HAP-1 (cell line): ENCODE measurements at regions of chr2 and their contacts with region 1.

Region 1: GRCh38 chr2:121218386-121218938 is 66.5 kb downstream of the TFCP2L1 start:
- DNase-seq: no peak
- H3K4me3 ChIP-seq: no peak overlapping the region
- H3K4me1 ChIP-seq: no peaks in the 10 kb centered on the region
- H3K27me3 ChIP-seq: no peaks in the 10 kb centered on the region

Region 2: GRCh38 chr2:121254748-121255147 is 36.3 kb after region 1 on chr2:
- in situ Hi-C with region 1: loop called (anchors 5 kb)
- DNase-seq: no peak
- H3K4me3 ChIP-seq: no peak overlapping the region
- H3K4me1 ChIP-seq: no peaks in the 10 kb centered on the region
- H3K27me3 ChIP-seq: no peaks in the 10 kb centered on the region